A673 (cell line): ENCODE measurements at regions of chr1 and their contacts with region 1.

Region 1: GRCh38 chr1:229529639-229530038 is 21.5 kb upstream of the NUP133 start:
- DNase-seq: no peak
- H3K4me3 ChIP-seq: no peak overlapping the region
- H3K27ac ChIP-seq: no peak overlapping the region
- H3K4me1 ChIP-seq: no peaks in the 10 kb centered on the region
- H3K27me3 ChIP-seq: no peaks in the 10 kb centered on the region
- CTCF ChIP-seq: no peak

Region 2: DNA sequence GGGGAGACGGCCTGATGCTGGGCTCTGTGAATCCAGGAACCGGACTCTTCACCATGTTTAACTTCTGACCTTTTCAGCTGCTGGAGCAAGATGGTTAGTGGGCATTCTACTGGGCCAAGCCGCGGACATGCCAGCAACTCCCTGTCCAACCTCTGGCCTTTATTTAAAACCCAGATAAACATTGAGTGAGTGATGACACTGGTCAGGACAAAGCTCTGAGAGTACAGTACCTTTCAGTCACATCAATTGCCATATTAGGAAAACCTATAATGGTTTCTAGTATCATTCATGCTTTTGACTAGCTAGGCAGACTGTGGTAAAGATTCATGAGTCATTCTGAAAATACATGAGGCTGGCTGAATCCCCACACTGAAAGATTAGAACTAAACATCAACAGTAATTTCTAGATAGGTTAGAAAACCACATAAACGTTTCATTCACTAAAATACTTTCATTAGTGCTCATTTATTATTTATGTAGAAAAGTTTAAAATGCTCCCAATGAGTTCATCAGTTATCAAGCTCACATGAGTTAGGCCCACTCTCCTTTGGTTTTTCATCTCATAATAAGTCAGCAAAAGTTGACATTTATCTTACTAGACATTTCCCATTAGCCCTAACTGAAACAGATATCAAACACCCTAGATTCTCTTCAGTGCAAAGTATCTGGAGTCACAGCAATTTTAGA is 88.6 kb before region 1 on chr1:
- CTCF ChIA-PET with region 1: no interaction called
- POLR2A ChIA-PET with region 1: interaction called, 16 read pairs
- intact Hi-C with region 1: no loop called
- DNase-seq: no peak
- H3K4me3 ChIP-seq: no peak overlapping the region
- H3K27ac ChIP-seq: no peak overlapping the region
- H3K4me1 ChIP-seq: no peaks in the 10 kb centered on the region
- H3K27me3 ChIP-seq: no peaks in the 10 kb centered on the region
- CTCF ChIP-seq: no peak